ENCODE measurements at regions of chr13 and their contacts with region 1.

Region 1: DNA sequence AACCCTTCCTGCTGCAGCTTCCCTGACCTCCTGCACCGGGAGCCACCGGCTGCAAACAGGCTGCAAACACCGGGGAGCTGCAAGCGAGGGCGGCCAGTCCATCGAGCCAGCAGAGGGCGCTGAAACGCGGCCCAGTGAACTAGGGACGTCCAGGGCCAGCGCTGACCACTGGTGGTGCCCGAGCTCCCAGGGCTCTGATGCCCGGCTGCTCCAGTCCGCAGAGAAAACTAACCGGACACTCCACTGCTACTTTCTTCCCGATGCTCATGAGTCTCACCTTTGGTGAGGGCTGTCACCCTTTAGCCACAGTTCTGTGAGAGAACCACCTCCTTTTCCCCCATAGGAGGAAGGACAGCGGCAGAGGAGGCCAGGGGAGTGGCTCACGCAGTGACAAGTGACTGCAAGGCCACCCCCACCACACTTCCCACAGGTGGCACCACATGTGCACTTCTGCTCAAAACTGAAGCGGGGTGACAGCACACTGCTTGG is 82.8 kb upstream of the MTIF3 start:
- DNase-seq: peak; percentile 75
- ATAC-seq: peak; percentile 55
- H3K4me3 Mint-ChIP-seq: no peak overlapping the region
- H3K27ac Mint-ChIP-seq: no peak overlapping the region
- H3K4me1 Mint-ChIP-seq: peaks cover 4% of the 10 kb centered on the region
- H3K27me3 Mint-ChIP-seq: peaks cover 6% of the 10 kb centered on the region

Region 2: GRCh38 chr13:27379694-27380641 is 153.2 kb before region 1 on chr13:
- CTCF ChIA-PET with region 1: interaction called, 3 read pairs
- POLR2A ChIA-PET with region 1: no interaction called
- intact Hi-C with region 1: loop called in 1 of 2 experiments (anchors 2 kb)
- DNase-seq: peak; percentile 81
- ATAC-seq: peak; percentile 72
- H3K4me3 Mint-ChIP-seq: no peak overlapping the region
- H3K27ac Mint-ChIP-seq: no peak overlapping the region
- H3K4me1 Mint-ChIP-seq: no peaks in the 10 kb centered on the region
- H3K27me3 Mint-ChIP-seq: peaks cover 6% of the 10 kb centered on the region

Region 3: GRCh38 chr13:27696731-27697130 is 163.5 kb after region 1 on chr13:
- CTCF ChIA-PET with region 1: no interaction called
- POLR2A ChIA-PET with region 1: no interaction called
- intact Hi-C with region 1: no loop called
- DNase-seq: no peak
- ATAC-seq: no peak
- H3K4me3 Mint-ChIP-seq: no peak overlapping the region
- H3K27ac Mint-ChIP-seq: no peak overlapping the region
- H3K4me1 Mint-ChIP-seq: peaks cover 20% of the 10 kb centered on the region
- H3K27me3 Mint-ChIP-seq: no peaks in the 10 kb centered on the region

Region 4: GRCh38 chr13:27712421-27712820 is 179.2 kb after region 1 on chr13:
- CTCF ChIA-PET with region 1: no interaction called
- POLR2A ChIA-PET with region 1: no interaction called
- intact Hi-C with region 1: loop called in 1 of 2 experiments (anchors 2 kb)
- DNase-seq: peak; percentile 34
- ATAC-seq: no peak
- H3K4me3 Mint-ChIP-seq: no peak overlapping the region
- H3K27ac Mint-ChIP-seq: no peak overlapping the region
- H3K4me1 Mint-ChIP-seq: no peaks in the 10 kb centered on the region
- H3K27me3 Mint-ChIP-seq: peaks cover 5% of the 10 kb centered on the region

Region 5: DNA sequence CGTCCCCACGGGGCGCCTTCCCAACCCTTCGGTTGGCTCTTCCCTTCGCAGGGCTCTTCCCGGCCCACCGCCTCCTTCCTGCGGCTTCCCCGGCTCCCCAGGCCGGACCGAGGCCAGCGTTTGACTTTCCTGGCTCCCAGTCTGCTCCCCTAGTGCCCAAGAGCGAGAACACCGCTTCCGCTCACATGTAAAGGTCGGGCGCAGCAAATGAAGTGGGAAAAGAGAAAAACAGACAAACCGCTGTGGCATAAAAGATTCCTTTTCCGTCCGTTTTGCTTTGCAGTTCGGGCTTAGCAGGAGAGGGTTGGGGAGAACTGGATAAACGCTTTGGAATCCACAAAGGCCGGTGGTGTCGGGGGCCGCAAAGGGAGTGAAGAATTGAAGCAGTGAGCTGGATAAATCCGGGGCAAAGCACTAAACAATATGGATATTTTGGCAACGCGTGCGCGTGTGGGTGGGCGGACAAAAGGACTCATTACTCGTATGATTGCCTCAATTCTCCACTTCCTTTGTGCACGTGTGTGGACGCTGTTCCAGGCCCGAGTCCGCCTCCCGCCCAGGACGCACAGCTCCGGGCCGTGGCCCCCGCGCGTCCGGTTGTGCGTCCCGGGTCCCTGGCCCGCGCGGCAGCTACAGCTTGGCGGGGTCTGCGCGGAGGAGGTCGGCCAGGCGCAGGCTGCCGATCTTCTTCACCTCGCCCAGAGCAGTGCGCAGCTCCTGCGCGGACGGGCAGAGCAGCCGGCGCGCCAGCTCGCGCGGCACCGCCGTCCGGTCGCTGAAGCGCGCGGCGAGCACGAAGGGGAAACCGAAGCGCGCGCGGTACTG is 444.5 kb after region 1 on chr13:
- CTCF ChIA-PET with region 1: no interaction called
- POLR2A ChIA-PET with region 1: no interaction called
- intact Hi-C with region 1: loop called in 1 of 2 experiments (anchors 10 kb)
- DNase-seq: no peak
- ATAC-seq: no peak
- H3K4me3 Mint-ChIP-seq: no peak overlapping the region
- H3K27ac Mint-ChIP-seq: no peak overlapping the region
- H3K4me1 Mint-ChIP-seq: peaks cover 15% of the 10 kb centered on the region
- H3K27me3 Mint-ChIP-seq: peaks cover 79% of the 10 kb centered on the region

Region 6: DNA sequence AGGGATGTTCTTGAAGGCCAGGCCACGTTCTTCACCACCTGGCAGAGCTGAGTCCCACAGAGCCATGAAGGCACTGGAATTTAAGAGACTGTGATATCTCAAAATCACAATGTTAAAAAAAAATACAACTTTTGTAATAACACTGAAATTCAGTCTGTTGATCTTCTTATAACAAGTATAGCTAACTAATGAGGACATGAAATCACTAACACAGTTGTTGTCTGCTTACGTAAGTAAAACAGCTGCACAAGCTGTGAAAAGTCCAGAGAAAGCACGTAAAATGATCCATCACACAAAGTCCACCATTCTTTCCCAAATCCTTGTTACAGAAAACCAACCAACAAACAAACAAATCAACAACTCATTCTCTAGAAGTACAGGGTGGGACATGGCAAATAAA is 534.3 kb after region 1 on chr13:
- CTCF ChIA-PET with region 1: no interaction called
- POLR2A ChIA-PET with region 1: no interaction called
- intact Hi-C with region 1: no loop called
- DNase-seq: no peak
- ATAC-seq: no peak
- H3K4me3 Mint-ChIP-seq: no peak overlapping the region
- H3K27ac Mint-ChIP-seq: no peak overlapping the region
- H3K4me1 Mint-ChIP-seq: peaks cover 4% of the 10 kb centered on the region
- H3K27me3 Mint-ChIP-seq: peaks cover 3% of the 10 kb centered on the region